ENCODE measurements at regions of chr14 and their contacts with region 1.

Region 1: DNA sequence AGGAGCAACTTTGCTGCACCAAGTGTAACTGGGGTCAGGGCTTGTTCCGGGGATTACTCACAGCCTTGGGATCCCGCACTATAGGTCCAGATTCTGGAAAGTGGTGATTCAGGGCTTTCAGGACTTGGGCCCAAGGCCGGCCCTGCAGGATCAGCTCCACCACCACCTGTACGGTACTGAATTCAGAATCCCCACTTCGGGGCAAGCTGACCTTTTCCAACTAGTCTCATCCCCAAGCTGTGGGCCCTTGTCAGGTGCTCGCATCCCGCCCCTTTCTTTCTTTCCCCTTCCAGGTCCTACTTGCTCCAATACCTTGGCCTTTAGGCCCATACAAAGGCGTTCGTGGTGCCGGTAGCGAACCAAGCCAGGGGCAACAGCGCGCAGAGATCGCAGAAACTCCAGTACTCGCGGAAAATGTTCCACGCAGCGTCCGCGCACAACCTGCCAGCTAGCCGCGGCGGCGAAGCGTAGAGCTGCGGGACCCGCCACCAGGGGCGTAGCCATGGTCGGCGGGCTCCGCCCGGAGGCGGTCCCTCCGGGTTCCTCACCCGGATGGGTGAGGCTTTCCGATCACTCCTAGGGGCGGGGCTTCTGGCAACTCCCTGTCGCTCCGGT is 487 bp downstream of the TINF2 start:
- DNase-seq: peak; percentile 94
- H3K4me3 Mint-ChIP-seq: peak overlapping the region; percentile 86
- H3K27ac Mint-ChIP-seq: peak overlapping the region; percentile 100
- H3K4me1 Mint-ChIP-seq: peaks cover 30% of the 10 kb centered on the region
- H3K27me3 Mint-ChIP-seq: no peaks in the 10 kb centered on the region
- CTCF ChIP-seq: peak; percentile 37

Region 2: DNA sequence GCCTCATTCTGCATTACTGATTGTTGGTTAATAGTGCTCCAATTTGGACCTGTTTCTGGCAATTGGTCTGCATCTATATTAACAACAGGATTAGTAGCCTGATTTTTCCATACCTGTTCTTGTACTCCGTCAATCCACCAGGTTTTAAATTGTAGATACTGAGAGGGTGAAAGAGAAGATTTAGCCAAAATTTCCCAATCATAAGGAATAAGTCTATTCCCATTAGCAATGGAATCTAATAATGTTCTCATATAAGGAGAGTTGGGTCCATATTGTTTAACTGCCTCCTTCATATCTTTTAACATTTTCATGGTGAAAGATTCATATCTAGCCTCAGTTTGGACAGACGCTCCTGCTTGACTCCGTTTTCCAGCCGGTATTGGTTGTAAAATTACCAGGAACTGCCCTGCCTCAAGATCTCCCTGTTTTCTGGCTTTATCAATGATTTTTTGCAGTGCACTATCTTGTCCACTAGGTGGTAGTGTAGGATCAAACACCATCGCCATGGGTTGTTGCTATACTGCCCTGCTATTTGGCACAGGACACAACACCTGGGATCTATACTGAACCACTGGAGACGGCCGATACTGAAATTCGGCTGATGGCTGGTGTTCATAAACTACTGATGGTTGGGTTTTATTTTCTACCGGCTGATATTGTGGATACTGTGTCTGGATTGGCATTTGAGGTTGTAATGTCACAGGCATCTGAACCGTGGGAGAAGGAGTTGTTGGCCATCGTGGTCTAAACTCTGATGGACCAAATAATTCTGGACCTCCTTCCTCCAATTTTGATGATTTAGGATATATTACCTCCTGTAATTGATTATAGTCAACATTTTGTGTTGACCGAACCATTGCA is 228.1 kb before region 1 on chr14:
- CTCF ChIA-PET with region 1: no interaction called
- POLR2A ChIA-PET with region 1: no interaction called
- intact Hi-C with region 1: loop called (anchors 5 kb)
- DNase-seq: peak; percentile 83
- H3K4me3 Mint-ChIP-seq: no peak overlapping the region
- H3K27ac Mint-ChIP-seq: no peak overlapping the region
- H3K4me1 Mint-ChIP-seq: no peaks in the 10 kb centered on the region
- H3K27me3 Mint-ChIP-seq: peaks cover 20% of the 10 kb centered on the region
- CTCF ChIP-seq: peak; percentile 80

Region 3: DNA sequence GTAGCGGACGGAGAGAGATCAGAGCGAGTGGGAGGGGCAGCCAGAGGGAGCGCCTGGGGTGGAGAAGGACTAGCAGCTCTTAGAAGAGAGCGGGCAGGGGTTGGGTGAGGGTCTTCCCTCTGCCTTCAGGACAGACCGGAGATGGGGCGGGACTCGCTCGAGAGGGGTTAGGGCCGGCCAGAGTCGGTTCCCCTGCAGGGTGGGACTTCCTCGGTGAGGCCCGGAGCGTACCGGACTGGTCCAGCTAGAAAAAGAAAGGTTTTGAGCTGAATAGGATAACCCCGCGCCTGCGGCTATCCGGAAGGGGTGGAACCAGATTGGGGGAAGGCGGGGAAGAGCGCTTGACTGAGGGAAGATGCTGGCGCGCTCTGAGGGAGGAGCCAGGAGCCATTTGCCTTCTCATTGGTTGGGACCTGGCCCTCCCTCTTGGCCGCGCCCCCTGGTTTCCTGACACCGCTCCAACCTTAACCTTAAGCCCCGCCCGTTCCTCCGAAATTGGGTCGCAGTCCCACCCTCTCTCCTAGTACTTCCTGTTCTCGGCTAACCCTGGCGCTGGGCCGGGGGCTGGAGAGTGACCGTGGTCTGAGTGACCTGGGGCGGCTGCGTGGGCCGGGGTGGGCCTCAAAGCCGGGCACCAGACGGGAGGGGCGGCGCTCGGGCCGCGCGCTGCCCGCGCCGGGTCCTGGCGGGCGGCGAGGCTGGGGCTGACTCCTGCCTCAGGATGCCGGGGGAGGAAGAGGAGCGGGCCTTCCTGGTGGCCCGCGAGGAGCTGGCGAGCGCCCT is 94.8 kb before region 1 on chr14 and contains the start of gene RNF31:
- CTCF ChIA-PET with region 1: no interaction called
- POLR2A ChIA-PET with region 1: interaction called, 10 read pairs
- intact Hi-C with region 1: no loop called
- DNase-seq: peak; percentile 99
- H3K4me3 Mint-ChIP-seq: peak within 1 kb of the TSS; percentile 98
- H3K27ac Mint-ChIP-seq: peak within 1 kb of the TSS; percentile 61
- H3K4me1 Mint-ChIP-seq: peaks cover under 1% of the 10 kb centered on the region
- H3K27me3 Mint-ChIP-seq: no peaks in the 10 kb centered on the region
- CTCF ChIP-seq: no peak
- total RNA-seq, gene RNF31: 62.2 and 67.4 TPM in 2 replicates

Region 4: GRCh38 chr14:24167469-24168114 is 74.3 kb before region 1 on chr14:
- CTCF ChIA-PET with region 1: no interaction called
- POLR2A ChIA-PET with region 1: no interaction called
- intact Hi-C with region 1: no loop called
- DNase-seq: no peak
- H3K4me3 Mint-ChIP-seq: no peak overlapping the region
- H3K27ac Mint-ChIP-seq: no peak overlapping the region
- H3K4me1 Mint-ChIP-seq: peaks cover 8% of the 10 kb centered on the region
- H3K27me3 Mint-ChIP-seq: no peaks in the 10 kb centered on the region
- CTCF ChIP-seq: no peak

Region 5: GRCh38 chr14:24215495-24216344 is 26.2 kb before region 1 on chr14 and contains the start of gene MDP1:
- CTCF ChIA-PET with region 1: interaction called, 9 read pairs
- POLR2A ChIA-PET with region 1: interaction called, 50 read pairs
- intact Hi-C with region 1: loop called (anchors 1 kb)
- DNase-seq: peak; percentile 87
- H3K4me3 Mint-ChIP-seq: peak within 1 kb of the TSS; percentile 80
- H3K27ac Mint-ChIP-seq: peak within 1 kb of the TSS; percentile 73
- H3K4me1 Mint-ChIP-seq: peaks cover 20% of the 10 kb centered on the region
- H3K27me3 Mint-ChIP-seq: no peaks in the 10 kb centered on the region
- CTCF ChIP-seq: peak; percentile 25
- total RNA-seq, gene MDP1: 11.0 and 20.2 TPM in 2 replicates

Region 6: DNA sequence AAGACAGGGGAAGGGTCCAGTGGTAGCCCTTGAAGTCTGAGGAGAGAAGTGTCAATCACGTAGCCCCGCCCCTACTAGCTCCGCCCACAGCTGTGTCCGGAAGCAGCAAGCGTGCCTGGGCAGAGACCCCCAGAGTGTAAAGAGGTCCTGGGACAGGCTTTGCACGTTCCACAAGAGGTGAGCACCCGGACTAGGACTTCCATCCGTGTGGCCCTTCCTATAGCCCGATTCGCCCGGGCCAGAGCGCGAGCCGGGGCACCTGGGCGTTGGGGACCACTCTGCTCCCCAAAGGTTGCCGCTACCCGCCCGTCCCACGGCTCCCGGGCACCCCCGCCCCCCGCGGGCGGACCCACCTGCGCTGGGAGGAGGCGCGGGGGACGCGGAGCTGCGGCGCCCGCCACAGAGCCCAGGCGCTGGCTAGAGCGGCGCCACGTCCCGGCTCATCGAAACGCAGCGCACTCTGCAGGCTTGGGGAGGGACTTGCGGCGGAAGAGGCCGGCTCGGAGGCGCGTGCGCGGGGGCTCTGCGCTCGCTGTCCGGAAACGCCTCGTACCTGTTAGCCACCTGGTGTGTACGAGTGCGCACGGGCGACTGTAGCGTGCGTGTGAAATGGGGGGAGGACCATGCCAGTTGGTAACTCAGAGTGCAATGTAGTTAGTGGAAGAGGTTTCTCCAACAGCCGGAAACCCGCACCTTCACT is 29.3 kb after region 1 on chr14 and contains the start of gene RABGGTA:
- CTCF ChIA-PET with region 1: interaction called, 457 read pairs
- POLR2A ChIA-PET with region 1: interaction called, 146 read pairs
- intact Hi-C with region 1: loop called (anchors 1 kb)
- DNase-seq: peak; percentile 88
- H3K4me3 Mint-ChIP-seq: peak within 1 kb of the TSS; percentile 89
- H3K27ac Mint-ChIP-seq: peak within 1 kb of the TSS; percentile 16
- H3K4me1 Mint-ChIP-seq: peaks cover 43% of the 10 kb centered on the region
- H3K27me3 Mint-ChIP-seq: no peaks in the 10 kb centered on the region
- CTCF ChIP-seq: peak; percentile 67
- total RNA-seq, gene RABGGTA: 51.7 and 75.0 TPM in 2 replicates

Region 7: DNA sequence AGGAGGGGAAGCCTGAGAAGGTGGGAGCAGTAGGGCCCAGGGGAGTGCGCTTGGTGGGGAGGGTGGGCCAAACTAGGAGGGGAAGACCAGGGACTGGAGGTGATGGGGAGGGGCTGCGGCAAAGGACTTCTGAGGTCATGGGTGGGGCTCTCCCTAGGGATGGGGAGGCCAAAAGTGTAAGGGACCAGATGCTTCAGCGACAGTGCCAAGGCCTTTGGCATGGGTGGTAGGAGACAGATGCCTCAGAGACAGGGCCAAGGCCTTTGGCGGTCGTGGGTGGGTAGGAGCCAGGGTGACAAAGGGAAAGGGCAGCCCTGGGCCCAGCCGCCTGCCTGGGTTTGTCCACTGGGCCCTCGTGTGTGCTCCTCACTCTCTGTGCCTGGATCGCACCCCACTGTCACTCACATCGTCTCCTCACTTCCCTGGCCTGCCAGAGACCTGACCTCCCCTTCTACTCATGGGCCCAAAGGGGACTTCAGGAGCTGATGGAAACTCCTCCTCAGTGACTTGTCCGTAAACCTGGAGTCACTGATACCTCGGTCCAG is 42.6 kb after region 1 on chr14:
- CTCF ChIA-PET with region 1: interaction called, 457 read pairs
- POLR2A ChIA-PET with region 1: interaction called, 25 read pairs
- intact Hi-C with region 1: no loop called
- DNase-seq: no peak
- H3K4me3 Mint-ChIP-seq: no peak overlapping the region
- H3K27ac Mint-ChIP-seq: no peak overlapping the region
- H3K4me1 Mint-ChIP-seq: peaks cover 27% of the 10 kb centered on the region
- H3K27me3 Mint-ChIP-seq: no peaks in the 10 kb centered on the region
- CTCF ChIP-seq: no peak

Region 8: GRCh38 chr14:24310646-24311604 is 69.0 kb after region 1 on chr14 and contains the start of gene LTB4R:
- CTCF ChIA-PET with region 1: interaction called, 92 read pairs
- POLR2A ChIA-PET with region 1: interaction called, 101 read pairs
- intact Hi-C with region 1: no loop called
- DNase-seq: peak; percentile 72
- H3K4me3 Mint-ChIP-seq: peak within 1 kb of the TSS; percentile 69
- H3K27ac Mint-ChIP-seq: no peak within 1 kb of the TSS
- H3K4me1 Mint-ChIP-seq: peaks cover 35% of the 10 kb centered on the region
- H3K27me3 Mint-ChIP-seq: no peaks in the 10 kb centered on the region
- CTCF ChIP-seq: peak; percentile 19
- total RNA-seq, gene LTB4R: 15.8 and 19.9 TPM in 2 replicates

Region 9: GRCh38 chr14:24411443-24412389 is 169.8 kb after region 1 on chr14:
- CTCF ChIA-PET with region 1: no interaction called
- POLR2A ChIA-PET with region 1: no interaction called
- intact Hi-C with region 1: no loop called
- DNase-seq: peak; percentile 61
- H3K4me3 Mint-ChIP-seq: no peak overlapping the region
- H3K27ac Mint-ChIP-seq: no peak overlapping the region
- H3K4me1 Mint-ChIP-seq: no peaks in the 10 kb centered on the region
- H3K27me3 Mint-ChIP-seq: no peaks in the 10 kb centered on the region
- CTCF ChIP-seq: peak; percentile 58

Region 10: DNA sequence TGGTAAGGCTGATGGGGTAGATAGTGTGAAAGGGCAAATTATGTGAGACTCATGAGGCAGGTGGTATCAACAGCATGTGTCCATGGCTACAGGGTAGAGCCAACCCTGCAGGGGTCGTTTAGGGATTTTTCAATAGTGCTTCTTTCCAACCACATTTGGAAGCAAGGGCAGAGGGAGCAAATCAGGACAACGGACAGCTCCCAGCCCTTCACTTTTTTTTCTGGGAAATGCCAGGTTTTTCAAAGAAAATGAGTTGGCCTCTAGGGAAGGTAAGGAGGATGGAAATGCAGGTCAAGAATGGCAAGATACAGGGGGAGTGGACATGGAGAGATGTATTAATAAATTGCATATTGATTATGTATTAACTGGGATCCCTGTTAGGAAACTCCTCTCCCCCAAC is 271.1 kb after region 1 on chr14:
- CTCF ChIA-PET with region 1: no interaction called
- POLR2A ChIA-PET with region 1: no interaction called
- intact Hi-C with region 1: no loop called
- DNase-seq: no peak
- H3K4me3 Mint-ChIP-seq: no peak overlapping the region
- H3K27ac Mint-ChIP-seq: no peak overlapping the region
- H3K4me1 Mint-ChIP-seq: no peaks in the 10 kb centered on the region
- H3K27me3 Mint-ChIP-seq: peaks cover 29% of the 10 kb centered on the region
- CTCF ChIP-seq: no peak

Measured in MCF 10A (cell line).